ENCODE measurements at regions of chr17 and their contacts with region 1.

Region 1: GRCh38 chr17:49031965-49032928 is 35.1 kb downstream of the IGF2BP1 start:
- DNase-seq: peak; percentile 46
- ATAC-seq: peak; percentile 34
- H3K4me3 Mint-ChIP-seq: no peak overlapping the region
- H3K27ac Mint-ChIP-seq: peak overlapping the region; percentile 95
- H3K4me1 Mint-ChIP-seq: peaks cover 29% of the 10 kb centered on the region
- H3K27me3 Mint-ChIP-seq: no peaks in the 10 kb centered on the region
- CTCF ChIP-seq: peak; percentile 73

Region 2: DNA sequence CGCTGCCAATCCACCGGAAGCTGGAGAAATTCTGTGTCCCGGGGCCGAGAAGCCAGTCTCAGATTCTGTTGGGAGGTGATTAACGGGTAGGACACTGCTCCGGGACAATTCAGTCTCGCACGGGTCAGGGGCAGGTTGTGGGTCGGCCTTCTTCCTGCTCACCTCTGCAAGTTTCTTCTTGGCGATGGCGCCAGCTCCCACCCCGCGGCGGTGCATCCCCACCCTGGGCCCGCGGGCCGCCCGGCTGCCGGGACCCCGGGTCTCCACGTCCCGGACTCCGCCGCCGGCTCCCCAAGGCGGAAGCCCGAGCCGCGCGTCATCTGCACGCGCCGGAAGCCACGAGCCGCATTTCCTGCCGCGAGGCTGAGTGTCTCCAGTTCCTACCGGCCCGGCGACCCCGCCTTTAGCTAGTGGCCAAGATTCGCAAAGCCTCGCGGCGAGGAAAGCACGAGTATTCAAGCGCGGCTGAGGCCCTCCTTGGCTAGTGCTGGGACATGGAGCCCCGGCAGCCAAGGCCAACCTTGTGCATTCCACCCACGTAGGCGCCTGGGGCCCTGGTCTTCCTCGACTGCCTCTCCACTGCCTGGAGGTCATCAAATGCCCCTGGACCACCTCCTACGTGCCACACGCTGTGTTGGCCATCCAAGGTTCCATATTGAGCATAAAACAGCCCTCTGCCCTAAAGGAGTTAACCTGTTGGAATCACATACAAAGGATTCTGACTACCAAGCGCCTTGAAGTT is 87.6 kb before region 1 on chr17 and contains the start of gene SNF8:
- CTCF ChIA-PET with region 1: interaction called, 22 read pairs
- POLR2A ChIA-PET with region 1: interaction called, 7 read pairs
- DNase-seq: peak; percentile 97
- ATAC-seq: peak; percentile 91
- H3K4me3 Mint-ChIP-seq: peak within 1 kb of the TSS; percentile 100
- H3K27ac Mint-ChIP-seq: peak within 1 kb of the TSS; percentile 97
- H3K4me1 Mint-ChIP-seq: peaks cover 10% of the 10 kb centered on the region
- H3K27me3 Mint-ChIP-seq: no peaks in the 10 kb centered on the region; the same call in 1 of the 2 replicates
- CTCF ChIP-seq: no peak
- total RNA-seq, gene SNF8: 116 to 136 TPM (median 127 TPM) in 3 replicates

Region 3: DNA sequence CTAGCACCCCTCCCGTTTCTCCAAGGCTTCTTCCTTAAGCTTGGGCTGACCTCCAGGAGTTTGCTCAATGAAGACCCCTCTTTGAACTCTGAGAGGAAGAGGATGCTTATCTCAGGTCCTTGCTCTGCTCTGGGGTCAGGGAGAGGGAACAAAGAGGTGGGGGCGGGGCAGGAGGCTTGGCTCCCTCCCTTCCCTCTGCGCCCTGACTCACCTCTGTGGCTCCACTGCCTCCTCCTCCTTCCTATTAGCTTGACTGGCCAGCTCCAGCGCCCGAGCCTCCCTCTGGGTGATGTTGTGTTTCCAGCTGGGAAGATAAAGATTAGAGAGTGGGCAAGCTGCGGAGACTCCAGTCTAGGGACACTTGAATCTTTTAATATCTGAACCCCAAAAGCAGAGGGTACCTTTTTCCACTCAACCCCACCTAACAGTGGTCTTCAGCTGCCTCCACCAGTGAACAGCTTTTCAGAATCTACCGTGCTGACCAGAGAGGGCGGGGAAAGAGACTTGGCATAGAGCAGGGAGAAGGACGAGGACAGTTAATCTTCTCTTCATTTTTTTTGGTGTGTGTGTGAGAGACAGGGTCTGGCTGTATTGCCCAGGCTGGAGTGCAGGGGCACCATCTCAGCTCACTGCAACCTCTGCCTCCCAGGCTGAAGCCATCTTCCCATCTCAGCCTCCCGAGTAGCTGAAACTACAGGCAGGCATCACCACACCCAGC is 70.6 kb before region 1 on chr17:
- CTCF ChIA-PET with region 1: interaction called, 47 read pairs
- POLR2A ChIA-PET with region 1: interaction called, 4 read pairs
- DNase-seq: peak; percentile 45
- ATAC-seq: peak; percentile 90
- H3K4me3 Mint-ChIP-seq: peak overlapping the region; percentile 53
- H3K27ac Mint-ChIP-seq: no peak overlapping the region
- H3K4me1 Mint-ChIP-seq: peaks cover 29% of the 10 kb centered on the region
- H3K27me3 Mint-ChIP-seq: no peaks in the 10 kb centered on the region; the same call in 1 of the 2 replicates
- CTCF ChIP-seq: no peak

Region 4: GRCh38 chr17:48997083-48997826 is 35.0 kb before region 1 on chr17 and contains the start of gene IGF2BP1:
- CTCF ChIA-PET with region 1: interaction called, 42 read pairs
- POLR2A ChIA-PET with region 1: interaction called, 20 read pairs
- DNase-seq: peak; percentile 77
- ATAC-seq: peak; percentile 34
- H3K4me3 Mint-ChIP-seq: peak within 1 kb of the TSS; percentile 83
- H3K27ac Mint-ChIP-seq: peak within 1 kb of the TSS; percentile 98
- H3K4me1 Mint-ChIP-seq: peaks cover 43% of the 10 kb centered on the region
- H3K27me3 Mint-ChIP-seq: no peaks in the 10 kb centered on the region
- CTCF ChIP-seq: no peak
- total RNA-seq, gene IGF2BP1: 392 to 434 TPM (median 423 TPM) in 3 replicates

Region 5: DNA sequence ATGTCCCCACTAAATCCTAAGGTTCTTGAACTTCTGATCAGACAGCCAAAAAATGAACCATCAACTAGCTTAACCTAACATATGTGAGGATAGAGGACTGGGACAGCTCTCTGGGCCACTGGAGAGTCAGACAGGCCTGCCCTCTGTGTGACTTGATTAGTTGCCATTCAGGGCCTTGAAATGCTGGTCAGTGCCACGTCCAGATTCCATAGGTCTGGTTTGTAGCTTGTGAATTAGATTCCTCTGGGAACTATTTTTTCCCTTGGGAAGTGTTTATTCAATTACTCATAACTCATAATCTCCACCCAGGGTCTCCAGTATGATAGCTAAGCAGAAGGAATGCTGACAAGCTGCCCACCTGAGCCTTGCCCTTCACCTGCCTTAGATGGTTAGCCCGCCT is 13.1 kb after region 1 on chr17:
- CTCF ChIA-PET with region 1: interaction called, 26 read pairs
- POLR2A ChIA-PET with region 1: interaction called, 5 read pairs
- DNase-seq: no peak
- ATAC-seq: no peak
- H3K4me3 Mint-ChIP-seq: no peak overlapping the region
- H3K27ac Mint-ChIP-seq: no peak overlapping the region
- H3K4me1 Mint-ChIP-seq: no peaks in the 10 kb centered on the region
- H3K27me3 Mint-ChIP-seq: no peaks in the 10 kb centered on the region
- CTCF ChIP-seq: no peak

Measured in WTC11 (cell line).